H1 (cell line): ENCODE measurements at regions of chr17 and their contacts with region 1.

Region 1: DNA sequence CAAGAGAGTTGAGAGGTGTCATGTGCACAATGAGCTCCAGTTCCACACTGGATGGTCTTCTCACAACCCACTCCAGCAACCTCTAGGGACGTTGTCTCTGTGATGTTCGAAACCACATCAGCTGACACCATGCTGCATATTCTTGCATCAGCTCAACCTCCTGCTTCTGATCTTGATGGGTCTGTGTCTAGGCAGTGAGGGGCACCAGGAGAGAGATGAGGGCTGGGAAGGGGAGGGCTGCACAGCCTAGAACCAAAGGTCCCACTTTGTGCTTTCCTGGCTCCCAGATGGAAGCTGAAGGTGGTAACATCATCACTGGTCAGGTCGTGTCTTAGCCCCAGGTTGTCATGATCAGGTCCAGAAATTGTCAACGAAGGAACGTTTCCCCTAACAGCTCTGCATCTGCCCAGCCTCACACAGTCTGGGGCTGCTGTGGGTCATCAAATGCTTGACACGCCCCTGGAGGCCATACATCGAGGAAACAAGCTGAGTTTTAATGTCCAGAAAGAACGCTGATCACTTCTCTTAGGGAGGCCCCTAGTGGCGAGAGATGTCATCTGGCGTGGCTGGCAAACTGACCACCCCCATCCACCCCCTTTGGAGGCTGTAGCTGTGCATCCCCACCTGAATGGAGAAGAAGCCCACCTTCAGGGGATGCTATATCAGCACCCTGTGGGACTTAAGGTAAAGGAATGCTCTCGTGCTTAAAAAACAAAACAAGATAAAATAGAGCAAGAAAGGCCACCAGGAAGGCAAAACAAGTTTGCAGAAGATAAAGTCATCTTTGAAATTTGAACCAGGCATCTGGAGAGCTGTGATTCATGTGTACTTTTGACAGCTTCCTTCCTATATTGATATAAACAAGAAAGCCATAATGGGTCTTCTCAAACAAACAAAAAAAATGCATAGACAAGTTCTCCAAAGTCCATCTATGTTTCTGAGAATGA is 58.3 kb downstream of the WIPI1 start:
- DNase-seq: peak in 1 of 2 experiments; percentile 79
- H3K4me3 ChIP-seq: no peak overlapping the region
- H3K27ac ChIP-seq: no peak overlapping the region
- H3K4me1 ChIP-seq: peaks cover 0 to 2% (median 0%) of the 10 kb centered on the region in 4 experiments; a peak in 1 of 7 replicates
- H3K27me3 ChIP-seq: no peaks in the 10 kb centered on the region
- CTCF ChIP-seq: peak; percentile 83 to 92 (median 92)
- EP300 ChIP-seq: no peak
- POLR2A ChIP-seq: no peak
- RAD21 ChIP-seq: peak; percentile 84 to 91

Region 2: GRCh38 chr17:68291844-68292695 is 106.9 kb before region 1 on chr17:
- CTCF ChIA-PET with region 1: interaction called, 11 read pairs
- POLR2A ChIA-PET with region 1: interaction called, 9 read pairs
- DNase-seq: peak in 1 of 2 experiments; percentile 85
- H3K4me3 ChIP-seq: peak overlapping the region; percentile 41 to 67 (median 56)
- H3K27ac ChIP-seq: 0 out of 2 replicates have a peak overlapping the region, but pooled peaks have one; percentile 44
- H3K4me1 ChIP-seq: peaks cover 18 to 40% (median 29%) of the 10 kb centered on the region in 4 experiments
- H3K27me3 ChIP-seq: peaks cover 8 to 25% (median 24%) of the 10 kb centered on the region in 4 experiments
- CTCF ChIP-seq: peak in 2 of 3 experiments; percentile 3 to 40; a peak in 3 of 4 replicates
- EP300 ChIP-seq: no peak
- POLR2A ChIP-seq: peak; percentile 37 to 61
- RAD21 ChIP-seq: peak; percentile 24 to 46; a peak in 3 of 4 replicates

Region 3: DNA sequence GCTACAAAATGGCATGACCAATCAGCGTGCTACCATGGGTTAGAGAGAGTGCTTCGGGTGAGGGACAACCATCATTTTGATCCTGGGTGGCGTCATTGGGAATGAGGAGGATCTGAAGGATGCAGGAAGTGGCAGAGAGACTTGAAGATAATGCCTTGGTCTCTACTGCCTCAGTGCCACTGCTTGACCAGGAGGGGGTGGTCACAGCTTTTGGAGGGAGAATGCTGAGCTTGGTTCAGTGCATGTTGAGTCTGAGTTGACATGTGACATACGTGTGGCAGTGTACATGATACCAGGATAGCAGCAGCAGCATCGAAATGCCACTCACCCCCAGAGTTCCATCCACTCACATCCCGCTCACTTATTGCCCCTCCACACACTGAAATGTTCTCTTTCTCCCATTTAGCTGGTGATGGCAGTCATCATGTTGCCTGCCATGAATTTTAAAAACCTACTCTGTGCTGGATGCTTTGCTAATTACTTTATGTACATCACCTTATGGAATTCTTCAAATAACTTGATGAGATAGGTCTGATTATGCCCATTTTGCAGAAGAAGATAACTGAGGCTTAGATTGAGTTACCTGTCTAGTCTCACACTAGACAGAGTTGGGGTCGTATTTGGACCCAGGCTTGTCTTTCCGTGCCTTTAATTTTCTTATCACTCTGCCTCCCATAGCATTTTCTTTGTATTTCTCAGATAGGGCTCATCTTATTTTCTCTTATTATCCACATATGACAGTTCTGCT is 71.0 kb before region 1 on chr17:
- CTCF ChIA-PET with region 1: interaction called, 42 read pairs
- POLR2A ChIA-PET with region 1: no interaction called
- DNase-seq: no peak
- H3K4me3 ChIP-seq: no peak overlapping the region
- H3K27ac ChIP-seq: no peak overlapping the region
- H3K4me1 ChIP-seq: no peaks in the 10 kb centered on the region
- H3K27me3 ChIP-seq: no peaks in the 10 kb centered on the region; a peak in 1 of 7 replicates
- CTCF ChIP-seq: peak; percentile 37 to 65 (median 45)
- EP300 ChIP-seq: no peak
- POLR2A ChIP-seq: no peak
- RAD21 ChIP-seq: peak; percentile 55 to 58

Region 4: GRCh38 chr17:68356520-68356919 is 42.4 kb before region 1 on chr17:
- CTCF ChIA-PET with region 1: interaction called, 10 read pairs
- POLR2A ChIA-PET with region 1: no interaction called
- DNase-seq: no peak
- H3K4me3 ChIP-seq: no peak overlapping the region
- H3K27ac ChIP-seq: no peak overlapping the region
- H3K4me1 ChIP-seq: peaks cover 0 to 13% (median 3%) of the 10 kb centered on the region in 4 experiments; a peak in 5 of 7 replicates
- H3K27me3 ChIP-seq: no peaks in the 10 kb centered on the region
- CTCF ChIP-seq: no peak
- EP300 ChIP-seq: no peak
- POLR2A ChIP-seq: no peak
- RAD21 ChIP-seq: no peak

Region 5: DNA sequence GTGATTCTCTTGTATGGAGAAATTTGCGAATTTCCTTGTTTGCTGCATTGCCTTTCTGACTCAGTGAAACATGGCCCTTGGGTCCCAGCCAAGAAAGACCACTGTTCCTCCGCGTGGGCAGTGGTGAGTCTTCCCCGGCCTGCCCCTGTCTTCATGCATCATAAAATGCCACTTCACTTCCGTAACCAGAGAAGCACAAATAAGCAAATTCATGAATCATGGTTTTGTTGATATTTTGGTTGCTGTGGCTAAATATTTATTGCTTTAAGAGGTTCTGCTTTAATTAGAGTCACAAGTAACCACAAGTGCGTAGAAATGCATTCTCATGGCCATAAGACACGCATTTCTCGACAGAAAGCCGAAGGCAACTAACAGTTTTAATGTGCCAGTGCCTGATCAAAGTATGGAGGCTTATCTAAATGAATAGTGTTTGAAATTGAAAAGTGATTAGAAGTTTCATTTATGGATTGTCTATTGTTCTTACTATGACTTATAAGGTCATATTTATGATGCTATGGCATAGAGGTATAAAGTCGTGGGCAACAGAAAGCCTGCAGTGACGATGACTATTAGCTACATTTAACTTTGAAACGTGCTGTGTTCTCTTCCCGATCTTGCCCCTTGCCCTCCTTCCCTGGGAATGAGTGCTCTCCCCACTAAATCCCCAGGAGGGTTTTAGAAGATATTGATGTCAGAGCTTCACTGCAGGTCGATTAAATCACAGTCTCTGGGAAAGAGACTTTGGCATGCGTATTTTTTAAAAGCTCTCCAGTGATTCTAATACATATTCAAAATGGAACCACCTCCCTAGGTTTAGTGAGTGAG is 17.7 kb before region 1 on chr17:
- CTCF ChIA-PET with region 1: interaction called, 41 read pairs
- POLR2A ChIA-PET with region 1: interaction called, 5 read pairs
- DNase-seq: no peak
- H3K4me3 ChIP-seq: no peak overlapping the region
- H3K27ac ChIP-seq: no peak overlapping the region
- H3K4me1 ChIP-seq: peaks cover 7 to 16% (median 12%) of the 10 kb centered on the region in 4 experiments
- H3K27me3 ChIP-seq: no peaks in the 10 kb centered on the region; a peak in 1 of 7 replicates
- CTCF ChIP-seq: no peak
- EP300 ChIP-seq: no peak
- POLR2A ChIP-seq: no peak
- RAD21 ChIP-seq: no peak

Region 6: GRCh38 chr17:68417317-68417716 is 18.4 kb after region 1 on chr17:
- CTCF ChIA-PET with region 1: interaction called, 13 read pairs
- POLR2A ChIA-PET with region 1: no interaction called
- DNase-seq: no peak
- H3K4me3 ChIP-seq: no peak overlapping the region
- H3K27ac ChIP-seq: no peak overlapping the region
- H3K4me1 ChIP-seq: peaks cover 0 to 6% (median 1%) of the 10 kb centered on the region in 4 experiments; a peak in 3 of 7 replicates
- H3K27me3 ChIP-seq: no peaks in the 10 kb centered on the region
- CTCF ChIP-seq: no peak
- EP300 ChIP-seq: no peak
- POLR2A ChIP-seq: no peak
- RAD21 ChIP-seq: no peak

Region 7: GRCh38 chr17:68435876-68436842 is 37.2 kb after region 1 on chr17:
- CTCF ChIA-PET with region 1: interaction called, 12 read pairs
- POLR2A ChIA-PET with region 1: no interaction called
- DNase-seq: peak in 1 of 2 experiments; percentile 89
- H3K4me3 ChIP-seq: no peak overlapping the region
- H3K27ac ChIP-seq: no peak overlapping the region
- H3K4me1 ChIP-seq: peaks cover 0 to 4% (median 0%) of the 10 kb centered on the region in 4 experiments; a peak in 2 of 7 replicates
- H3K27me3 ChIP-seq: no peaks in the 10 kb centered on the region
- CTCF ChIP-seq: peak; percentile 74 to 99 (median 87)
- EP300 ChIP-seq: no peak
- POLR2A ChIP-seq: no peak
- RAD21 ChIP-seq: peak; percentile 92 to 93

Region 8: DNA sequence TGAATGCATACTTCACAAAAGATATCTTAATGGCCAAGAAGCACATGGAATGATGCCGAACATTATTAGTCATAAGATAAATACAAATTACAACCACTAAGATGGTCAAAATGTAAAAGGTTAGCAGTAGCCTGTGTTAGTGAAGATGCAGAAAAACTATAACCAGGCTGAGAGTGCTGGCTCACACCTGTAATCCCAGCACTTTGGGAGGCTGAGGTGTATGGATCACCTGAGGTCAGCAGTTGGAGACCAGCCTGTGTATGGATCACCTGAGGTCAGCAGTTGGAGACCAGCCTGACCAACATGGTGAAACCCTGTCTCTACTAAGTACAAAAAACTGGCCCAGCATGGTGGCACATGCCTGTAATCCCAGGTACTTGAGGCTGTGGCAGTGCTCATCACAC is 247.7 kb after region 1 on chr17:
- CTCF ChIA-PET with region 1: no interaction called
- POLR2A ChIA-PET with region 1: no interaction called
- DNase-seq: no peak
- H3K4me3 ChIP-seq: no peak overlapping the region
- H3K27ac ChIP-seq: no peak overlapping the region
- H3K4me1 ChIP-seq: peaks cover 0 to 2% (median 0%) of the 10 kb centered on the region in 4 experiments; a peak in 1 of 7 replicates
- H3K27me3 ChIP-seq: no peaks in the 10 kb centered on the region
- CTCF ChIP-seq: no peak
- EP300 ChIP-seq: no peak
- POLR2A ChIP-seq: no peak
- RAD21 ChIP-seq: no peak